ENCODE measurements at regions of chr10 and their contacts with region 1.

Region 1: GRCh38 chr10:75235375-75236177 is at the start of gene COMTD1:
- DNase-seq: peak; percentile 96
- H3K27ac ChIP-seq: peak within 1 kb of the TSS; percentile 97
- CTCF ChIP-seq: peak; percentile 100

Region 2: GRCh38 chr10:75136346-75136745 is 99.2 kb before region 1 on chr10:
- CTCF ChIA-PET with region 1: no interaction called
- POLR2A ChIA-PET with region 1: no interaction called
- DNase-seq: no peak
- H3K27ac ChIP-seq: no peak overlapping the region
- CTCF ChIP-seq: no peak

Region 3: DNA sequence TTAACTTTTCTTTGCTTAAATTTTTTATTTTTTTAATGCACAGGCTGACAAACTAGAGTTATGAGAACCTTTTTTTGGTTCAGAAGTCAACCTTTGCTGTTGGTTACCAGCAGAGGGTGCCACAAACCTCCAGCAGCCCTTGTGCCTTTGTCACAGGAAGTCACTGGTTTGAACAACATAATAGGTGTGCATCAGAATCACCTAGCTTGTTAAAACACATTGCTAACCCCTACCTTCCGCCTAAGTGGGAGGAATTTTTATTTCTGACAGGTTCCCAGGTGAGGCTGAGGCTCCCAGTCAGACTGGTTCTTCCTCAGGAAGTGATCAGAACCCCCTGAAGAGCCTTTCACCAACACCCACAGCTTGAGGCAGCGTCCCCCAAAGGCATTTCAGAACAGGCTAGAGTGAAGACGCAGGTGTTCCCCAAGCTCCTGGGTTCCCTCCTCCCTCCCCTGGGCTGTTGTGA is 47.6 kb before region 1 on chr10:
- CTCF ChIA-PET with region 1: interaction called, 40 read pairs
- POLR2A ChIA-PET with region 1: interaction called, 16 read pairs
- DNase-seq: peak; percentile 79
- H3K27ac ChIP-seq: peak overlapping the region; percentile 73
- CTCF ChIP-seq: peak; percentile 83

Region 4: DNA sequence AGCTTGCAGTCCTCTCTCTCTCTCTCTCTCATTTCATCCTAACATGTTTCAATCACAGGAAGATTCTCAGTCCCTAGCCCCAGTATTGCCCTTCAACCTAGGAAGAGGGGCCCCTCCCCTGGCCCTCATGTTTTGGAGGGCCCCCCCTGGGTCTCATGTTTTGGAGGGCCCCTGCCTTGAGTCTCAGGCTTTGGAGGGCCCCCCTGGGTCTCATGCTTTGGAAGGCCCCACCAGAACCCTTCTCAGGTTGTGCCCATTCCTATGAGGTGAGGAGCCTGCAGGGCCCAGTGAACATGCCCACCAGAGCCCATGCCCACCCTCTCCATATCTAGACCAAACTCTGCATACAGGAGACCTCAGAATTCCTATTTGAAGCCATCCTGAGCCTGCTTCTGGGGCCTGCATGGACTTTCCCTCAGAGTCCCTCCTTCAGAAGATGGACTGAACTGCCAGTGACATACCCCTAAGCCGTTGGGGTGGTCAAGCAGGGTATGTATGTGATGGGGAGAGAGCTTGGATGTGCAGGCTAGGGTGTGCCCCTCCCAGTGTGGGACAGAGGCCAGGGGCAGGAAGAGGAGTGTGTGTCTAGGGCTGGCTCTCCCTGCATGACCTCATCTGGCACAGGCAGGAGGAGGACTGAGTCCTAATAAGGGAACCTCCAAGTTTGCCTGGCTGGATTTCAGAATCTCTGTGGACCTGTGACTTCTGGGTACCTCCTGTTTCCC is 33.1 kb before region 1 on chr10:
- CTCF ChIA-PET with region 1: interaction called, 10 read pairs
- POLR2A ChIA-PET with region 1: no interaction called
- DNase-seq: peak; percentile 45
- H3K27ac ChIP-seq: peak overlapping the region; percentile 99
- CTCF ChIP-seq: no peak

Region 5: DNA sequence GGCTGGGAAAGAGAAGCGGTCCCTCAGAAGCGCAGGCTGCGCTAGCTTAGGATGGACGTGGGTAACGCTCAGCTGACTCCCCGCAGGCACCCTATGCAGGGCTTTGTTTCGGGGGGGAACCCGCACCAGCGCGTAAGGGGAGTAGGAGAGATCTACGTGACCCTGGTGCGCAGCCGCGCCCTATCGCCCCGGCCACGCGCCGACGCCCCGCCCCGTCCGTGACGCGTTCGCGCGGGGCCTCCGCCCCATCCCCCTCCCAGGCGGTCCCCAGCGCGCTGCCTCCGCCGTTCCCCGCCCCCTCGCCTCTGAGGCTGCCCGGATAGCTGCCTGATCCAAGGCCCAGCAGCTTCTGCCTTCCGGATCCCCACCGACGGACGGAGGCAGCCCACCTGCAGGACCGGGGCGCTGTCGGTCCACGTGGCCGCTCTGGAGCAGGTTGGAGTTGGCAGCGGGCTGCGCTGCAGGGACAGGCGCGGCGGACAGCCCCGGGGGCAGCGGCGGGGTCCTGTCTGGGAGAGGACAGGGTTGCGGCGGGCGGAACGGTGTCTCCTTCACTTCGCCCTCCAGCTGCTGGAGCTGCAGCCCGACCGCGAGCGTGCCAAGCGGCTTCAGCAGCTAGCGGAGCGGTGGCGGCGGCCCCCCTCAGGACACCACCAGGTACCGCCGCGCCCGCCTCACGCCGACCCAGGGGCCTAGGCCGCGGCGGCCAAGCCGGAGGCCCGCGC is 25.1 kb before region 1 on chr10 and contains the start of gene VDAC2:
- CTCF ChIA-PET with region 1: interaction called, 14 read pairs
- POLR2A ChIA-PET with region 1: interaction called, 5 read pairs
- DNase-seq: peak; percentile 89
- H3K27ac ChIP-seq: peak within 1 kb of the TSS; percentile 99
- CTCF ChIP-seq: no peak